Gastrocnemius medialis (tissue), 4 donors: ENCODE measurements at regions of chr1 and their contacts with region 1.

Region 1: GRCh38 chr1:203600782-203601736 is 25.6 kb upstream of the ATP2B4 start:
- DNase-seq: no peak
- ATAC-seq: no peak
- H3K4me3 ChIP-seq: no peak overlapping the region
- H3K27ac ChIP-seq: no peak overlapping the region
- H3K4me1 ChIP-seq: no peaks in the 10 kb centered on the region
- H3K27me3 ChIP-seq: no peaks in the 10 kb centered on the region
- CTCF ChIP-seq: no peak
- POLR2A ChIP-seq: no peak

Region 2: DNA sequence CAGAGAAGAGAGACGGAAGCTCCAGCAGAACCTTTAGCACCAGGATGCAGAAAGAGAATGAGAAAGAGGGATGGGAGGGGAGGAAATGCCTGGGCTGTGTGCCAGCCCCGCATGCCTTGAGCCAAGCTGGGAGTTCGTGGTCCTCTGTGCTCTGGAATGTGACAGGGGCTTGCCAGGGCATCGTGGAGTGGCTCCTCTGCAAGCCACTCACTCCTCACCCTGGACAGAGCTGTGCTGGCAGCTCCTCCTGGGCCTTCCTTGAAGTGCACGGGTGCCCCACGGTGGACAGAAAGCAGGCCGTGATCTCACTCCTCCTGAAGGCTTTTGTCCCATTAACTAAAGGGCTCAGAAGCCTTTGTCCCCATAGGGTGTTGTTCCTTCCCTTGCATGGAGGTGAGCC is 160.3 kb before region 1 on chr1:
- in situ Hi-C with region 1: no loop called
- intact Hi-C with region 1: no loop called
- DNase-seq: peak; percentile 47 to 72
- ATAC-seq: peak; percentile 43 to 69
- H3K4me3 ChIP-seq: no peak overlapping the region
- H3K27ac ChIP-seq: no peak overlapping the region
- H3K4me1 ChIP-seq: no peaks in the 10 kb centered on the region
- H3K27me3 ChIP-seq: no peaks in the 10 kb centered on the region
- CTCF ChIP-seq: peak in 3 of 5 experiments; percentile 34 to 52 (median 44)
- POLR2A ChIP-seq: no peak

Region 3: DNA sequence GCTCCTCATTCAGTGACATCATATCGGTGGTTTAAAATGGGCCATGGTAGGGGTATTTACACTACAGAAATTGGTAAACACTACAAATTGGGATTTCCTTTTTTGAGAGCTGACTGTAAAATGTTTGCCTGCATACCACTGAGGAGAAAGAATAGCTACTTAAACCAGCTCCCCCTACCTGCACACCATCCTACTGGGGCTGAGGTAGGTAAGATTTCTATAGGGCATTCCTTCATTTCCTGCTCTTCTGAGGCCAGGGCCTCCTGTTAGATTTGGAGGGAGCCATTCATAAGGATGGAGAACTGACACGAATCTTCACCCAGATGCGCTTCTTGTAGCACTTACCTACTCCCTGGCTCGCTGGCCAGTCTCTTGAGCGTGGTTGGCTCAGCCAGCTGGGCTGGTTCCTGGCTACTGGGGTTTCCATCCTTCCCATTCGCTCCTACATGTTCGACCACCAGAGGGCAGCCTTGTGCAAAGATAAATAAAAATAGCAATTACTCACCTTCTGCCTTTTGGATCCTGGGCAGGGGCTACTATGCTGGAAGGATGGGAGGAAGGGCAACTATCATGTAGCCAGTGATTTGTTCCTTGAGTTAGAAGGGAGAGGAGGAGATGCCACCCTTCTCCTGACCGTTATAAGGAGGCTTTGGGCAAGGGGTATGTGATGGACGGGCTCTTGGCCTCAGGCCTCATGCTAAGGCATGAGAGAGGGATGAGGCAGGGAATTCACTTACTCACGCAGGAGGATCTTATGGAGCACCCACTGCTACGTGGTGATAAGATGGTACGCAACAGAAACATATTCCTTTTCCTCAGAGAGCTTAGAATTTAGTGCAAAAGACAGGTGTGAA is 96.4 kb before region 1 on chr1:
- in situ Hi-C with region 1: loop called in 1 of 4 experiments (anchors 10 kb)
- intact Hi-C with region 1: no loop called
- DNase-seq: peak; percentile 60 to 70
- ATAC-seq: peak; percentile 78 to 88
- H3K4me3 ChIP-seq: no peak overlapping the region
- H3K27ac ChIP-seq: no peak overlapping the region
- H3K4me1 ChIP-seq: peaks cover 11 to 13% of the 10 kb centered on the region in 2 donors
- H3K27me3 ChIP-seq: no peaks in the 10 kb centered on the region
- CTCF ChIP-seq: peak; percentile 65 to 94 (median 85)
- POLR2A ChIP-seq: no peak